Head of caudate nucleus (tissue), 42 donors: ENCODE measurements at regions of chr14 and their contacts with region 1.

Region 1: DNA sequence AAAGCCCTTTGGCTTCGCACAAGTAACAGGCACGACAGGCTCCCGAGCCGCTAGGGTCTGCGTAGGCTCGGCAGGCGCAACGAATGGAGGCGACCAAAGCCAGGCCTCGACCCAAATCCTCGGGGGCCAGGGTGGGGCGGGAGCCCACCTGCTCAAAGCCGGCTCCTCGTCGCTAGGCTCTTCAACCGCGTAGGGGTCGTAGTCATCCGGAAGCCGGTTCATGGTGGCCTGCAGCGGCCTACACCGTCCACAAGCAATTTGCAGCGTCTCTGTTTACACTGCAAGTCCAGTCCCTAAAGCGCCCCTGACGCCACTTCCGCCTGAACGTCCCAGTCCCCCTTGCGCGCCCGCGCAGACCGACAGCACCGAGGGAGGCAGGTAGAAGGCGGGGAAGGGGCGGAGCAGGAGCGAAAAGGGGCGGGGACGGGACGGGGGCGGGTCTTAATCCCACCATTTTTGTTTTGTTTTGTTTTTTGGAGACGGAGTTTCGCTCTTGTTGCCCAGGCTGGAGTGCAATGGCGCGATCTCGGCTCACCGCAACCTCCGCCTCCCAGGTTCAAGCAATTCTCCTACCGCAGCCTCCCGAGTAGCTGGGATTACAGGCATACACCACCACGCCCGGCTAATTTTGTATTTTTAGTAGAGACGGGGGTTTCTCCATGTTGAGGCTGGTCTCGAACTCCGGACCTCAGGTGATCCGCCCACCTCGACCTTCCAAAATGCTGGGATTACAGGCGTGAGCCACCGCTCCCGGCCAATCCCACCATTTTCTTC is at the start of gene EAPP:
- DNase-seq: peak; percentile 97 to 99 (median 98)

Region 2: DNA sequence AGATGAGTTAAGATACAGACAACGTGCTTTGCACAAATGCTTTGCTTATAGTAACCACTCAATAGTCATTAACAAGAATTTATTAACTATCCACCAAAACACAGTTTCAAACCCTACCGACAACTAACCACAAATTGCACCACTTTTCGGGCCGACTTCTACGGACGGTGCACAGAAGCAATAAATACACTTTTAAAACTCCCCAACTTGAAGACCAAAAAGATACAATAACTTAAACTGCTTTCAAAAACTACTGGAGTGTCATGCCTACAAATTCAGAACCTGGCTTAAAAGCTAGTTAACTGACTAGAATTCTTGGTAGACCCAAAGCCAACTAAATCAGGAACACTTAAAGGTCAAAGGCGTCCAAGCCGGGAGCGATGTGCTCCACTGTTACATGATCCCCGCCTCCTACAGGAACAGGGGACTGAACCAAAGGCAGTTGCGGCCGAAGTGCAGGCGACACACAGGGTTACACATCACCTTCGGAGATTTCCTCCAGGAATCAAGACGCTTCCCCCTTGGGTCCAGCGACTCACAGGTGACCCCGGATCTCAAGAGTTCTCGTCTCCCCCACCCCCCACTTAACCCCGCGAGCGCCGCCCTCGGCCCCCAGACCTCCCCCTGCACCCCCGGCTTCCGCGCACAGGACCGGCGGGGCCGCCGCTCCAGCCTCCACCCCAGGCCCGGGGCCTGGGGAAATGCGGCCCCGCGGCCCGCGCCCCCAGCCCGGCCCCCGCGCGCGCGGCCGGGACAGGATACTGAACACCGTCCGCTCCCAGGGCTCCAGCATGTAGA is 78.1 kb before region 1 on chr14:
- intact Hi-C with region 1: loop called (anchors 5 kb)
- DNase-seq: peak in 40 of 42 donors; percentile 10 to 74 (median 39)